Vagina (tissue), 2 donors: ENCODE measurements at regions of chr1 and their contacts with region 1.

Region 1: GRCh38 chr1:114219172-114219868 is 65.7 kb upstream of the SYT6 start:
- DNase-seq: no peak
- H3K4me3 ChIP-seq: peak overlapping the region; percentile 23 to 29
- H3K27ac ChIP-seq: peak overlapping the region; percentile 8
- H3K4me1 ChIP-seq: peaks cover 19% of the 10 kb centered on the region
- H3K27me3 ChIP-seq: no peaks in the 10 kb centered on the region
- CTCF ChIP-seq: peak in 1 of 3 experiments; percentile 12
- POLR2A ChIP-seq: no peak

Region 2: GRCh38 chr1:113978863-113979702 is 240.2 kb before region 1 on chr1 and contains the start of gene OLFML3:
- intact Hi-C with region 1: loop called (anchors 10 kb)
- DNase-seq: peak in 1 of 2 donors; percentile 96
- H3K4me3 ChIP-seq: peak within 1 kb of the TSS; percentile 45 to 46
- H3K27ac ChIP-seq: peak within 1 kb of the TSS; percentile 90
- H3K4me1 ChIP-seq: peaks cover 79% of the 10 kb centered on the region
- H3K27me3 ChIP-seq: no peaks in the 10 kb centered on the region
- CTCF ChIP-seq: peak; percentile 54 to 76 (median 74)
- POLR2A ChIP-seq: peak in 1 of 2 donors; percentile 71
- total RNA-seq, gene OLFML3: 108 TPM

Region 3: DNA sequence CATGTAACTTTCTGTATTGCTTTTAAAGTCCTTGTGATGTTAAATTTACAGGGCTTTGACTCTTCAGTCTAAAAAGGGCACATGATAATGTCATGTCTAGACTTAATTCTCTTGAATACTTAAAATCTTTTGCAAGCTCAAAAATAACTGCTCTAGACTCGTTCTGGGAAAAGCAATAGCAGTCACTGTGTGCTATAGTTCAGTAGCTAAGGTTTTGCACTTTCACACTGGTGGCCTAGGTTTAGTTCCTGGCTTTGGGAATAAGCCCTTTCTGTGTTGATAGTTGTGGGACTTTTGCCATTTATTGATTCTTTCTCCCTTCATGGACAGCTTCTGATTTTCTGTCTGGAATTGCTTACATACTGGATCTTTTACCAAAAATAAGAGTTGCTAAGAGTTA is 140.4 kb after region 1 on chr1:
- intact Hi-C with region 1: no loop called
- DNase-seq: no peak
- H3K4me3 ChIP-seq: no peak overlapping the region
- H3K27ac ChIP-seq: no peak overlapping the region
- H3K4me1 ChIP-seq: no peaks in the 10 kb centered on the region
- H3K27me3 ChIP-seq: no peaks in the 10 kb centered on the region
- CTCF ChIP-seq: no peak
- POLR2A ChIP-seq: no peak